H1 (cell line): ENCODE measurements at regions of chr5 and their contacts with region 1.

Region 1: DNA sequence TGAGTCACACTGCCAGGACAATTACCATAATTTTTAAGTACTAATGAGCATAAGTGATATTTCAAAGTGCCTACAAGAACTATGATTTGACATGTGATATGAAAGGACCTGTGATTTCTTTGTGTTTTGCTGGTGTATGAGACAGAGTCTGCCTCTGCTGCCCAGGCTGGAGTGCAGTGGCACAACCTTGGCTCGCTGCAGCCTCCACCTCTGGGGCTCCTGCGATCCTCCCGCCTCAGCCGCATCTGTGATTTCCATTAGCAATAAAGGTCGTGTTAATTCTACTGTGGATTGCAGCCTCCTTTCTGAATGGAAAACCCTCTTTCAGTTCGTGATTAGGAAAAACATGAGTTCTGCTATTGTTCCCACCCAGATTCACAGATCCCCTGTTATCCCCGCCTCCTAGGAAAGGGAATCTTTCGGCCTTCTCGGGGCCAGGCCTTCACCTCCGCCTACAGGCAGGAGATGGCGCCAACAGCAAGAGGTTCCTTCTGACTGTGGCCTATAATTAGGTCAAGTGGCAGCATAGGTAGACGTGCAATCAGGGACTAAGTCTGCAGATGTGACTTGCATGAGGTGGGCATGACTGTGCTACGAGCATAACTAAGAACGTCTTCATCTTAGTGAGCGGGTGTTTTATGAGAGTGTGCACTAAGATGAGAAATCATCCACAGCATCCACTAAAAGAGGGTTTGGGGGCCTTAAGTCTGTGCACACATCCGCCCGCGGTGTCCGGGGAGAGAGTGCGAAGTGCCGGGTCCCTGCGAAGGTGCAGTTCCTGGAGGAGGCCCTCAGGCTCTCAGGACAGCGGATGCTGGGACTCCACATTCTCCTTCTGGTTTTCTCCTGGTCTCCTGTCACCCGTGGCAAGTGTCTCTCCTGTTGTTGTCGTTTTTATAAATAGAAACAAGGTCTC is 23.1 kb downstream of the TRIM7 start:
- DNase-seq: peak in 1 of 2 experiments; percentile 76
- H3K4me3 ChIP-seq: no peak overlapping the region
- H3K27ac ChIP-seq: no peak overlapping the region
- H3K4me1 ChIP-seq: no peaks in the 10 kb centered on the region
- H3K27me3 ChIP-seq: no peaks in the 10 kb centered on the region
- CTCF ChIP-seq: peak in 2 of 3 experiments; percentile 80 to 90; a peak in 3 of 4 replicates
- EP300 ChIP-seq: no peak
- POLR2A ChIP-seq: no peak
- RAD21 ChIP-seq: peak; percentile 85

Region 2: DNA sequence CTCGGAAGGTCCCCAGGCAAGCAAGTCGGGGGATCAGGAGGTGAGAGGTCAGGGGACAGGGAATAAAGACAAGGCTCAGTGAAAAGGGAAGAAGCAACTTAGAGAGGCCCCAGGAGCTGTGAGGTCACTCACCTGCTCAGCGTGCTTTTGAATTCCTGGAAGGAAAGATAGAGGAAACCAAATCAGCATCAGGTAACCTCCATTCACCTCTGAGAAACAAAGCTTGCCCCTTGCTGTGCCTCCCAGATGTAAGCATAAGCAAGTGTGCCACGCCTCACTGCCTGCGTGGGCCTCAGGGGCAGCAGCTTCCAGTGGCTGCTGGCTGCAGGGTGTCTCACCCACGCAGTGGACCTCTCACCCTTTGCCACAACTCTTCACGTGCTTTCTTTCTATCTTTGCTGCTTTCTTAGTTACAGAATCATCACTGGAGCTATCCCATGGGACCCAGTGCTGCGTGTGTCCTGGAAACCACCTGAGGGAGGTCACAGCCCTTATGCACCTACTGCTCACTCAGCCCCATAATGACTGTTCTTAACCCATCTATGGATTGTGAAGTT is 17.1 kb after region 1 on chr5:
- CTCF ChIA-PET with region 1: interaction called, 197 read pairs
- POLR2A ChIA-PET with region 1: interaction called, 90 read pairs
- DNase-seq: no peak
- H3K4me3 ChIP-seq: peak overlapping the region in 1 of 4 experiments; percentile 22; a peak in 2 of 8 replicates
- H3K27ac ChIP-seq: no peak overlapping the region
- H3K4me1 ChIP-seq: peaks cover 9 to 36% (median 20%) of the 10 kb centered on the region in 4 experiments
- H3K27me3 ChIP-seq: peaks cover 11 to 60% (median 37%) of the 10 kb centered on the region in 4 experiments
- CTCF ChIP-seq: no peak
- EP300 ChIP-seq: no peak
- POLR2A ChIP-seq: no peak
- RAD21 ChIP-seq: no peak